ENCODE measurements at regions of chr3 and their contacts with region 1.

Region 1: GRCh38 chr3:178436773-178437172 is 99.5 kb upstream of the KCNMB2 start:
- DNase-seq: no peak
- H3K4me3 ChIP-seq: no peak overlapping the region
- H3K27ac ChIP-seq: no peak overlapping the region
- H3K4me1 ChIP-seq: no peaks in the 10 kb centered on the region
- H3K27me3 ChIP-seq: no peaks in the 10 kb centered on the region
- CTCF ChIP-seq: peak; percentile 50 to 51

Region 2: DNA sequence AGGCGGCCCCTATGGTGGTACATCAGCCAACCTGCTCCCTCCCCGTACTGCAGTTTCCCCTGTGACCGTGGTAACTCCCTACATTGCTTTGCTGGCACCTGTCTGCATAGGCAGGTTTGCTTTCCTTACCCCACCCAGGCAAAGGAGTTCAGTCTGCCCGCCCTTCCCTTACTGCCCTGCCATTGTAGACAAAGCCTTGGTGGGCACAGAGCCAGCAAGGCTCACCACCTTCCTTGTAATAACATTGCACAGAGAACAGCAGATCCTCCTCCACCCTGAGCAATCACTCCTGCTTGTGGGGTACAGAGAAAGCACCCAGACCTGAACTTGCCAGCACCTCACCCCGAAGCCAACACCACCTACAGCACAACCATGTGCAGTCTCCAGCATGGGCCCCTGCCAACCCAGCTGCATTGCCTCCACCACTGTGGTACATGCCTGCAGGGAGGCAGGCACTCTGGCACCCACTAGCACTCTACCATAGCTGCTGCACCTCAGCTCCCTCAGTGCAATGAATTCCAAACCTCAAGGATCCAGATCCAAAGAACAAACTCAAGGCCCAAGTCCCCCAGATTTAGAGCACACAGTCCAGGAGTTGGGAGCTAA is 93.2 kb before region 1 on chr3:
- CTCF ChIA-PET with region 1: no interaction called
- dilution Hi-C with region 1: no loop called
- in situ Hi-C with region 1: no loop called
- intact Hi-C with region 1: no loop called
- DNase-seq: no peak
- H3K4me3 ChIP-seq: no peak overlapping the region
- H3K27ac ChIP-seq: no peak overlapping the region
- H3K4me1 ChIP-seq: no peaks in the 10 kb centered on the region
- H3K27me3 ChIP-seq: no peaks in the 10 kb centered on the region
- CTCF ChIP-seq: no peak

Region 3: GRCh38 chr3:178583963-178584575 is 147.3 kb after region 1 on chr3:
- CTCF ChIA-PET with region 1: no interaction called
- dilution Hi-C with region 1: no loop called
- in situ Hi-C with region 1: no loop called
- intact Hi-C with region 1: no loop called
- DNase-seq: no peak
- H3K4me3 ChIP-seq: no peak overlapping the region
- H3K27ac ChIP-seq: no peak overlapping the region
- H3K4me1 ChIP-seq: no peaks in the 10 kb centered on the region
- H3K27me3 ChIP-seq: peaks cover 2% of the 10 kb centered on the region
- CTCF ChIP-seq: no peak

Region 4: DNA sequence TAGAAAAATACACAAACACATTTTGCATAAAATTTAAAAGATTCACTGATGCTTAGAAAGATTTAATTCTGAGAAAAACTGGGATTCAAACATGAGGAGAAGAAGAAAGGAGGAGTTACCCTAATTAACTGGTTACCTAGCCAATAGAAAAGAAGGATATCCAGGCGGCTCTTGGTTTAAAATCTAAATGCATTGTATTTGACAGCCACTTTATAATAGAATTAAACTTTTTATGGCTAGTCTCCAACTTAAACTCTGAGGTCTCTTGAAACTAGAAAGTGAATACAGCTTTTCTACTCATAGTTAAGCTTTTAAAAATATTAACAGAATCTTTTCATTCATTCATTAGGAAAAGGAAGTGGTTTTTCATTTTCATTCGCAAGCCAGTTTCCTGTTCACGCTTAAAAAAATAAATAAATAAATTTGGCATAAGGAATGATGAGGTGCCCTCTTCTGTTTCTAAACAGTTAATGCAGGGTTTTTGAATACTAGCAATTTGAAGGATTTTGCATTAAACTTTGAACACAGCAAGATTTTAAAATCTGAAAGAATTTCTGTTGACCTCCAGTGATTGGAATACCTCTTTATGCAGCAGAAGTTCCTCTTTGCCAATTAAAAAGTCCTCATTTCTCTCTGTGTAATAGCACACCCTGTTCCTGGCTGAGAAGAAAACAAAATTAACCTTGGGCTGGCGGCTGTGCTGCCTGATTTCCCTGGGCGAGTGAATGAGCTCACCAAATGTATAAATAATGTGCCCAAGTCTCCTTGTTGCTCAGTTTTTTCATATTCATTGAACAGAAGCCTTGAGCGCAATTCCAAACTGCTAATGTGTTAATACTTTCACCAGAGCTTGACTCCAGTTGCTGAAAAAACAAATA is 529.8 kb after region 1 on chr3:
- CTCF ChIA-PET with region 1: no interaction called
- dilution Hi-C with region 1: loop called (anchors 25 kb)
- in situ Hi-C with region 1: loop called in 1 of 2 experiments (anchors 25 kb)
- intact Hi-C with region 1: loop called (anchors 1 kb)
- DNase-seq: peak; percentile 30
- H3K4me3 ChIP-seq: no peak overlapping the region
- H3K27ac ChIP-seq: no peak overlapping the region
- H3K4me1 ChIP-seq: peaks cover 1% of the 10 kb centered on the region
- H3K27me3 ChIP-seq: no peaks in the 10 kb centered on the region
- CTCF ChIP-seq: peak; percentile 54 to 64

Region 5: DNA sequence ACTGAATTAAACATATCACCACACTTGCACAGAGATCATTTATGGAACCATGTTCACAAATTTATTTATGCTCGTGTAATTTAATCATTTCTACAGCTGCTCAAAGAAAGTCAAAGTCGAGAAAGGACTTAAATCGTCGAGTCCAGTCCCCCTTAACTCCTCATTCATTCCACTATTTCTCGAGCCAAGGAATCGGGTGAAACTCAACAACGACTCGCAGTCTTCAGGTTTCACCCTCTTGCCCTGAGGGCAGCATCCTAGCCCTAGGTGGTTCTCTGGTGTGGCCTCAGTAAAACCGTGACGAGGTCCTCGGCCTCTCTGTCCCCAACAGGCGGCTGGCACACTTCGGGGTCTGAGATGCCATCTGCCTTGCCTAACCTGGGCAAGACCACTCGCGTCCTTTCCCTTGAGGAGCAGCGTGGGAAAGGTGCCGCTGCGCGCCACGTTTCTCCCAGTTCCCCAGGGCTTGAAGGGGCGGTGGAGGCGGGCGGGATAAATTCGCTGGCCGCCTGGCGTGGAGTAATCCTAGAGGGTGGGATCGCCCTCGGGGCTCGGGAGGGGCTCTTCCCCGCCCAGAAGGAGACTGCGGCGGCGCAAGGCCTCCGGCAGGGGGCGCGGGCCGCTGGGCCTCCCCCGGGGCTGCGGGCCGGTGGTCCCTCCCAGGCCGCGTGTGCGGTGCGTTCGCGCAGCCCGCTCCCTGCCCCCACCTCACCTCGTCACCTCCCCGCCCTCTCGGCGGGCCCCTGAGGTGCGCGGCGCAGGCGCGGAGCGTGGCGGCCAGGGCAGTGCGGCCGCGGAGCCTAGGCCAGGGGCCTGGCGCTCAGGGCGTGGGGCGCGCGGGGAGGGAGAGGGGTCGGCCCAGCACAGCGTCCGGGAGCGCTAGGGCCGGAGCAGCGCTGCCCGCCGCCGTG is 885.8 kb after region 1 on chr3 and contains the start of gene ZNF639:
- CTCF ChIA-PET with region 1: no interaction called
- dilution Hi-C with region 1: no loop called
- in situ Hi-C with region 1: loop called (anchors 25 kb)
- intact Hi-C with region 1: loop called (anchors 2 kb)
- DNase-seq: peak; percentile 67
- H3K4me3 ChIP-seq: peak within 1 kb of the TSS; percentile 79 to 96 (median 80)
- H3K27ac ChIP-seq: peak within 1 kb of the TSS; percentile 63
- H3K4me1 ChIP-seq: peaks cover 25% of the 10 kb centered on the region
- H3K27me3 ChIP-seq: no peaks in the 10 kb centered on the region
- CTCF ChIP-seq: peak; percentile 41 to 58
- total RNA-seq, gene ZNF639: 25.3 to 27.7 TPM